Naive thymus-derived CD4-positive, alpha-beta T cell (primary cell): ENCODE measurements at regions of chr2 and their contacts with region 1.

Region 1: GRCh38 chr2:195937176-195937575 is 131.5 kb downstream of the DNAH7 start:
- DNase-seq: no peak
- ATAC-seq: no peak
- H3K4me3 ChIP-seq: no peak overlapping the region
- H3K4me3 Mint-ChIP-seq: no peak overlapping the region
- H3K27ac ChIP-seq: no peak overlapping the region
- H3K27ac Mint-ChIP-seq: no peak overlapping the region
- H3K4me1 ChIP-seq: no peaks in the 10 kb centered on the region
- H3K4me1 Mint-ChIP-seq: no peaks in the 10 kb centered on the region
- H3K27me3 ChIP-seq: no peaks in the 10 kb centered on the region
- H3K27me3 Mint-ChIP-seq: peaks cover 0 to 15% (median 9%) of the 10 kb centered on the region in 5 donors

Region 2: DNA sequence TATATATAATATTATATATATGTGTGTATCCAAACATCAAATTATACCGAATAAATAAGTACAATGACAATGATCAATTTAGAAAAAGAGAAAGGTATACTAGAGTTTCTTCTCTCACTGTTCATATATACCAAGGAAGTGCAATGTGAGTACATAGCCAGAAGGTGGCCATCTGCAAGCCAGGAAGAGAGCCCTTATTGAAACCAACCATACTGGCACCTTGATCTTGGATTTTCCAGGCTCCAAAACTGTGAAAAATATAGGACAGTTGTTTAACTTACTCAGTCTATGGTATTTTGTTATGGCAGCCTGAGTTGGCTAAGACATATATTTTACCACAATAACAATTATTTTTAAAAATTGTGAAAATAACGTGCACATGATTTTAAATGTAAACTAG is 1770.4 kb before region 1 on chr2:
- CTCF ChIA-PET with region 1: no interaction called
- POLR2A ChIA-PET with region 1: no interaction called
- intact Hi-C with region 1: loop called (anchors 1 to 2 kb)
- DNase-seq: peak in 2 of 9 donors; percentile 6 to 16
- ATAC-seq: no peak
- H3K4me3 ChIP-seq: no peak overlapping the region
- H3K4me3 Mint-ChIP-seq: no peak overlapping the region
- H3K27ac ChIP-seq: no peak overlapping the region
- H3K27ac Mint-ChIP-seq: no peak overlapping the region
- H3K4me1 ChIP-seq: no peaks in the 10 kb centered on the region
- H3K4me1 Mint-ChIP-seq: no peaks in the 10 kb centered on the region
- H3K27me3 ChIP-seq: no peaks in the 10 kb centered on the region
- H3K27me3 Mint-ChIP-seq: peaks cover 0 to 5% (median 0%) of the 10 kb centered on the region in 5 donors

Region 3: DNA sequence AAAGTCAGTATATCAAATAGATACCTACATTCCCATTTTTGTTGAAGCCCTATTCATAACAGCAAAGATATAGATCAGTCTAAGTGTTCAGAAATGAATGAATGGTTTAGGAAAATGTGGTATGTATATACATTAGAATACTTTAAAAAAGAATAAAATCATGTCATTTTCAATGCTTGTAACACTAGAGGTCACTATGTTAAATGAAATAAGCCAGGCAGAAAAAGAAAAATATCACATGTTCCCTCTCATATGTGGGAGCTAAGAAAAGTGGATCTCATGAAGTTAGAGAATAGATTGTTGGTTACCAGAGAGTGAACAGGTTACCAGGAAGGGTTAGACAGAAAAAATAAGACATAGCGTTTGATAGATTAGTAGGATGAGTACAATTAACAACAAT is 1391.2 kb before region 1 on chr2:
- CTCF ChIA-PET with region 1: interaction called, 3 read pairs
- POLR2A ChIA-PET with region 1: no interaction called
- intact Hi-C with region 1: loop called in 1 of 2 experiments (anchors 5 kb)
- DNase-seq: no peak
- ATAC-seq: no peak
- H3K4me3 ChIP-seq: no peak overlapping the region
- H3K4me3 Mint-ChIP-seq: no peak overlapping the region
- H3K27ac ChIP-seq: no peak overlapping the region
- H3K27ac Mint-ChIP-seq: no peak overlapping the region
- H3K4me1 ChIP-seq: no peaks in the 10 kb centered on the region
- H3K4me1 Mint-ChIP-seq: no peaks in the 10 kb centered on the region
- H3K27me3 ChIP-seq: no peaks in the 10 kb centered on the region
- H3K27me3 Mint-ChIP-seq: peaks cover 0 to 8% (median 0%) of the 10 kb centered on the region in 5 donors

Region 4: GRCh38 chr2:195318440-195319111 is 618.6 kb before region 1 on chr2:
- CTCF ChIA-PET with region 1: no interaction called
- POLR2A ChIA-PET with region 1: no interaction called
- intact Hi-C with region 1: loop called in 1 of 2 experiments (anchors 2 kb)
- DNase-seq: peak in 7 of 9 donors; percentile 11 to 57 (median 53)
- ATAC-seq: peak; percentile 57
- H3K4me3 ChIP-seq: no peak overlapping the region
- H3K4me3 Mint-ChIP-seq: no peak overlapping the region
- H3K27ac ChIP-seq: no peak overlapping the region
- H3K27ac Mint-ChIP-seq: no peak overlapping the region
- H3K4me1 ChIP-seq: no peaks in the 10 kb centered on the region
- H3K4me1 Mint-ChIP-seq: peaks cover 0 to 35% (median 18%) of the 10 kb centered on the region in 7 donors
- H3K27me3 ChIP-seq: no peaks in the 10 kb centered on the region
- H3K27me3 Mint-ChIP-seq: no peaks in the 10 kb centered on the region

Region 5: DNA sequence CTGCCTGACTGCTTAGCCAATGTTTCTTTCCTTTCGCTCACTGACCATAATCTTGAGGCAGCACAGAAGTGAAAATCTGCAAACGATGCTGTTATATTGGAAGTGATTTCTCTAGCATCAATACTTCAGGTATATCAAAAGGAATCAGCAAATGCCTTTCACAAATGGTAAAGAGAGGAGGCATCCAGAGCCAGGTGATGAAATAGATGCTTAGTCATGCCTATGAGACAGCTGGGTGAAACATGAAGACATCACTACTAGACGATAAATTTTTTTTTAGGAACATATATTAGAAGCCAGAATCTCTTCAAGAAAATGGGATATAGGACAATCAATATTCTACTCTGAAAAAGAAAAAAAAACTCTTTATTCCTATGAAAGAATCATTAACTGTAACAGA is 529.4 kb before region 1 on chr2:
- CTCF ChIA-PET with region 1: interaction called, 3 read pairs
- POLR2A ChIA-PET with region 1: no interaction called
- intact Hi-C with region 1: loop called in 1 of 2 experiments (anchors 1 kb)
- DNase-seq: no peak
- ATAC-seq: no peak
- H3K4me3 ChIP-seq: no peak overlapping the region
- H3K4me3 Mint-ChIP-seq: no peak overlapping the region
- H3K27ac ChIP-seq: no peak overlapping the region
- H3K27ac Mint-ChIP-seq: peak overlapping the region in 1 of 9 donors; percentile 76
- H3K4me1 ChIP-seq: no peaks in the 10 kb centered on the region
- H3K4me1 Mint-ChIP-seq: peaks cover 0 to 17% (median under 1%) of the 10 kb centered on the region in 7 donors
- H3K27me3 ChIP-seq: no peaks in the 10 kb centered on the region
- H3K27me3 Mint-ChIP-seq: no peaks in the 10 kb centered on the region

Region 6: GRCh38 chr2:195498176-195498575 is 439.0 kb before region 1 on chr2:
- CTCF ChIA-PET with region 1: interaction called, 4 read pairs
- POLR2A ChIA-PET with region 1: no interaction called
- intact Hi-C with region 1: loop called in 1 of 2 experiments (anchors 5 kb)
- DNase-seq: peak in 7 of 9 donors; percentile 25 to 60 (median 47)
- ATAC-seq: peak; percentile 68
- H3K4me3 ChIP-seq: no peak overlapping the region
- H3K4me3 Mint-ChIP-seq: peak overlapping the region in 4 of 10 donors; percentile 20 to 60 (median 32)
- H3K27ac ChIP-seq: no peak overlapping the region
- H3K27ac Mint-ChIP-seq: peak overlapping the region in 7 of 9 donors; percentile 14 to 88 (median 63)
- H3K4me1 ChIP-seq: peaks cover 0 to 19% of the 10 kb centered on the region in 2 donors
- H3K4me1 Mint-ChIP-seq: peaks cover 12 to 81% (median 54%) of the 10 kb centered on the region in 7 donors
- H3K27me3 ChIP-seq: no peaks in the 10 kb centered on the region
- H3K27me3 Mint-ChIP-seq: no peaks in the 10 kb centered on the region

Region 7: DNA sequence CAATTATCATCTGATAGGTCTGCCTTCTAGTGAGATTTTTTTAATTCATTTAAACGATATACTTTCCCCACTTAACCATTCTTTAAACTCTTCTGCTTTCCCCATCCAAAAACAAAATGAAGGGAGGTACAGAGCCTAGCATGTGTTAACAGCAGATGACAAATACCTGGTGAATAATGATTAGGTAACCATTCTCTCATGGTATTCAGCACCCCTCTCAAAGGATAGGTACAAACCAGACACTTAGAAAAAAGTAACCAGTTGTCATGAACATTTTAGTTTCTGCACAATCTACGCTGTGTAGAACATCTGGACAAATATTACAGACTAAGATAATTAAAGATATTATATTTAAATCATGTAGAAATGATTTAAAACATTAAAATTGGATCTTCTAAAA is 75.1 kb after region 1 on chr2:
- CTCF ChIA-PET with region 1: no interaction called
- POLR2A ChIA-PET with region 1: no interaction called
- intact Hi-C with region 1: no loop called
- DNase-seq: no peak
- ATAC-seq: no peak
- H3K4me3 ChIP-seq: no peak overlapping the region
- H3K4me3 Mint-ChIP-seq: no peak overlapping the region
- H3K27ac ChIP-seq: no peak overlapping the region
- H3K27ac Mint-ChIP-seq: no peak overlapping the region
- H3K4me1 ChIP-seq: no peaks in the 10 kb centered on the region
- H3K4me1 Mint-ChIP-seq: no peaks in the 10 kb centered on the region
- H3K27me3 ChIP-seq: no peaks in the 10 kb centered on the region
- H3K27me3 Mint-ChIP-seq: peaks cover 0 to 23% (median 11%) of the 10 kb centered on the region in 5 donors